Naive thymus-derived CD4-positive, alpha-beta T cell (primary cell): ENCODE measurements at regions of chr19 and their contacts with region 1.

Region 1: GRCh38 chr19:3821857-3822364 is 35.7 kb upstream of the MATK start:
- DNase-seq: peak; percentile 76 to 96 (median 89)
- ATAC-seq: peak; percentile 99
- H3K4me3 ChIP-seq: peak overlapping the region; percentile 3
- H3K4me3 Mint-ChIP-seq: peak overlapping the region in 7 of 10 donors; percentile 31 to 71 (median 66)
- H3K27ac ChIP-seq: no peak overlapping the region
- H3K27ac Mint-ChIP-seq: peak overlapping the region in 8 of 9 donors; percentile 20 to 81 (median 57)
- H3K4me1 ChIP-seq: peaks cover 0 to 13% of the 10 kb centered on the region in 2 donors
- H3K4me1 Mint-ChIP-seq: peaks cover 0 to 32% (median 18%) of the 10 kb centered on the region in 7 donors
- H3K27me3 ChIP-seq: no peaks in the 10 kb centered on the region
- H3K27me3 Mint-ChIP-seq: no peaks in the 10 kb centered on the region

Region 2: GRCh38 chr19:3665681-3666544 is 156.0 kb before region 1 on chr19:
- CTCF ChIA-PET with region 1: no interaction called
- POLR2A ChIA-PET with region 1: no interaction called
- intact Hi-C with region 1: loop called in 1 of 2 experiments (anchors 1 kb)
- DNase-seq: peak; percentile 60 to 89 (median 79)
- ATAC-seq: peak; percentile 93
- H3K4me3 ChIP-seq: no peak overlapping the region
- H3K4me3 Mint-ChIP-seq: no peak overlapping the region
- H3K27ac ChIP-seq: no peak overlapping the region
- H3K27ac Mint-ChIP-seq: peak overlapping the region in 3 of 9 donors; percentile 10 to 65 (median 41)
- H3K4me1 ChIP-seq: peaks cover 0 to 7% of the 10 kb centered on the region in 2 donors
- H3K4me1 Mint-ChIP-seq: peaks cover 0 to 13% (median 5%) of the 10 kb centered on the region in 7 donors
- H3K27me3 ChIP-seq: no peaks in the 10 kb centered on the region
- H3K27me3 Mint-ChIP-seq: no peaks in the 10 kb centered on the region

Region 3: DNA sequence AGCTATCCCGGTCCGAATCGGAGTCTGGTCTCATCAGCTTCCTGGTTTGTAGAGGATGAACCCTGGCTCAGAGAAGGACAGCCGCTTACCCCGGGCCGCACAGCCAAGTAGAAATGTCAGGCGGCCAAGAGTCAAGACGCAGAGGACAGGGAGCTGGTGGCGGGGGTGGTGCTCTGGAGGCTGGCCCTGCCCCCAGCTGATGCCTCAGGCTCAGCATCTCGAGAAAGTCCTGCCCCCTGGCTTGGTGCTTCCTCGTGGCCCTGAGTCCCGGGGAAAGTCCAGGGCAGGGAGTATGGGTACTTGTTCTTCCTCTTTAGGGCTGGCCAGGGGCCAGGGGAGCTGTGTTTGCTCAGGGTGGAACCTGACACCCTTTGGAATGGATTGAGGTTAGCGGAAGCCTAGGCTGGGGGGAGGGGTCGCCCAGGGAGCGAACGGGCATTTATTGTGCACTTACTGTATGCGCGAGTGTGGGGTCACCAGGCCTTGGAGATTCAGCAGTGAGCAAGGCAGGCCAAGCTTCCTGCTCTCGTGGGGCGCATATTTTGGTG is 111.6 kb before region 1 on chr19:
- CTCF ChIA-PET with region 1: interaction called, 4 read pairs
- POLR2A ChIA-PET with region 1: no interaction called
- intact Hi-C with region 1: loop called in 1 of 2 experiments (anchors 5 kb)
- DNase-seq: no peak
- ATAC-seq: peak; percentile 83
- H3K4me3 ChIP-seq: no peak overlapping the region
- H3K4me3 Mint-ChIP-seq: no peak overlapping the region
- H3K27ac ChIP-seq: no peak overlapping the region
- H3K27ac Mint-ChIP-seq: no peak overlapping the region
- H3K4me1 ChIP-seq: no peaks in the 10 kb centered on the region
- H3K4me1 Mint-ChIP-seq: peaks cover 0 to 12% (median 5%) of the 10 kb centered on the region in 7 donors
- H3K27me3 ChIP-seq: no peaks in the 10 kb centered on the region
- H3K27me3 Mint-ChIP-seq: peaks cover 0 to 11% (median 0%) of the 10 kb centered on the region in 5 donors

Region 4: GRCh38 chr19:3770136-3771030 is 51.5 kb before region 1 on chr19:
- CTCF ChIA-PET with region 1: no interaction called
- POLR2A ChIA-PET with region 1: no interaction called
- intact Hi-C with region 1: no loop called
- DNase-seq: no peak
- ATAC-seq: no peak
- H3K4me3 ChIP-seq: no peak overlapping the region
- H3K4me3 Mint-ChIP-seq: no peak overlapping the region
- H3K27ac ChIP-seq: no peak overlapping the region
- H3K27ac Mint-ChIP-seq: no peak overlapping the region
- H3K4me1 ChIP-seq: peaks cover 0 to 7% of the 10 kb centered on the region in 2 donors
- H3K4me1 Mint-ChIP-seq: peaks cover 5 to 15% (median 7%) of the 10 kb centered on the region in 7 donors
- H3K27me3 ChIP-seq: no peaks in the 10 kb centered on the region
- H3K27me3 Mint-ChIP-seq: no peaks in the 10 kb centered on the region

Region 5: DNA sequence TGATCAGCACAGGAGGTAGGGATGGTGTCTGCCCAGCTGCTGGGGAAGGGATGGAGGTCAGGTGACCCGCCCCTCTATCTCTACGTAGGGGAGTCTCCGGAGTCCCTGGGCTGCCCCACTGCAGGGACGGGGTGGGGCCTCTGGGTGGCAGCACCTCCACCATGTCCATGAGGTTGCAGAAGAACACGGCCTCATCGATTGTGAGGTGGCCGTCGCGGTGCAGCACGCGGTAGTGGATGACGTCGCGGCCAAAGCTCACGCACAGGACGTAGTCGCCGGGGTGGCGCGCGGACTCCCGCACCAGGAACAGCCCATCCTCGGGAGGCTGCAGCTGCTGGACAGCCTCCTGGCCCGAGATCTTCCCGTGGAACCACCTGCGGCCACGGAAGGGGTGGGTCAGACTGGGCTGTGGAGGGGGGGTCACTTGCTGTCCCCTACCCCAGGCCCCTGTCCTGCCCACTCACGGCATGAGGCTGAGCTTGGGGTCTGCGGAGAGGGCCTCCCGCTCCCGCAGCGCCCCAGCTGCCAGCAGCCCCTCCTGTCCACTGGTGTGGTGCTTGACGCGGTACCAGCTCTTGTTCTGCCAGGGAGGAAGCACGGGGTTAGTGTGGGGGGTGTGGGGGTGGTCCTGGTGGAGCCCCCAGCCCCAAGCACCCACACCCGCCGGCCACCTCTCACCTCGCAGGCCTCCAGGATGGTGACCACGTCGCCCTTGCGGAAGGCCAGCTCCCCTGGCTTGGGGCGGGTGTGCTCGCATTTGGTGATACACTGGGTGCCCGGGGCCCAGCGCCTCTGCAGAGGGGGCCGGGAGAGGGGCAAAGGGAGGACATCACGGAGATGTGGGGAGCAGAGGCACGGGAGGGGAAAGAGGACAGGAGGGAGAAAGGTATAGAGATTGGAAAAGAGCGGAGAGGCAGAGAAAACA is 38.0 kb before region 1 on chr19:
- CTCF ChIA-PET with region 1: no interaction called
- POLR2A ChIA-PET with region 1: no interaction called
- intact Hi-C with region 1: loop called (anchors 1 to 5 kb)
- DNase-seq: peak in 5 of 9 donors; percentile 31 to 43 (median 38)
- ATAC-seq: peak; percentile 66
- H3K4me3 ChIP-seq: no peak overlapping the region
- H3K4me3 Mint-ChIP-seq: peak overlapping the region; percentile 23 to 88 (median 82)
- H3K27ac ChIP-seq: no peak overlapping the region
- H3K27ac Mint-ChIP-seq: peak overlapping the region in 1 of 9 donors; percentile 50
- H3K4me1 ChIP-seq: no peaks in the 10 kb centered on the region
- H3K4me1 Mint-ChIP-seq: peaks cover 0 to 18% (median 8%) of the 10 kb centered on the region in 7 donors
- H3K27me3 ChIP-seq: no peaks in the 10 kb centered on the region
- H3K27me3 Mint-ChIP-seq: peaks cover 0 to 18% (median 0%) of the 10 kb centered on the region in 5 donors

Region 6: DNA sequence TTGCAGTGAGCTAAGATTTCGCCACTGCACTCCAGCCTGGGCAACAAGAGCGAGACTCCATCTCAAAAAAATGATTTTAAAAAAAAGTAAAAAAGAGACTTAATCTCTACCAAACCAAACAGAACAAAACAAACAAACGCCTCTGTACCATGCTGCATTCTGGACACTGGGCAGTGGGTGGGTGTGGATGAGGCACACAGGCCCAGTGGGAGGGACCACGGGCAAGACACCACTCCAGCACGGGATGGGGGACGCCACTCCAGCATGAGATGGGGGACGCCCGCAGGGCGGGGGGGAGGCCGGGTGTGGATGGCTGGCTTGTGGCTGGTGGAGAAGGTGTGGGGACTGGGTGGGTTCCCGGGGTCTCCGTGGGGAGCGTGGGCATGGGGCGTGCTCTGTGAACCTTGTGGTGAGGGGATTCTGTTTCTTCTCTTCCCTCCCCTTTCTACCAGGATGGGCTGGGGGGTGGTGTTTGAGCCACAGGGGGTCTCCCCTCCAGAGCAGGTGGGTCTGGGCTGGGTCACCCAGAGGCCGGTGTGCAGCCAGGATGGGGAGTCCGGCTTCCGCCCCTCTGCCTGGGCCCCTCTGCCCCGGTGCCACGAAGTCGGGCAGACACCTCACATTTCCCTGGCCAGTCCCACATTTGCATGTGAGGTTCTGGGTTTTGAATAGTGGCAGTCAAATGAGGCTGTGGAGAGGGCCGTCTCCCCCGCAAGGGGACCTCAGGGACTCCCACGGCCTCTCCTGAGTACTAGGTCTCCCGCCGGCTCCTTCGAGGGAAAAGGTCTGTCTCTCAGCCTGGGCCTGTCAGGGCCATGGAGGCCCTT is 11.8 kb before region 1 on chr19:
- CTCF ChIA-PET with region 1: interaction called, 9 read pairs
- POLR2A ChIA-PET with region 1: interaction called, 14 read pairs
- intact Hi-C with region 1: loop called in 1 of 2 experiments (anchors 1 kb)
- DNase-seq: no peak
- ATAC-seq: no peak
- H3K4me3 ChIP-seq: no peak overlapping the region
- H3K4me3 Mint-ChIP-seq: no peak overlapping the region
- H3K27ac ChIP-seq: no peak overlapping the region
- H3K27ac Mint-ChIP-seq: peak overlapping the region in 5 of 9 donors; percentile 10 to 63 (median 32)
- H3K4me1 ChIP-seq: peaks cover 26 to 36% of the 10 kb centered on the region in 2 donors
- H3K4me1 Mint-ChIP-seq: peaks cover 24 to 41% (median 36%) of the 10 kb centered on the region in 7 donors
- H3K27me3 ChIP-seq: no peaks in the 10 kb centered on the region
- H3K27me3 Mint-ChIP-seq: no peaks in the 10 kb centered on the region